ENCODE measurements at regions of chr2 and their contacts with region 1.

Region 1: GRCh38 chr2:64644177-64645004 is 9.3 kb downstream of the SERTAD2 start:
- DNase-seq: peak; percentile 80
- CTCF ChIP-seq: no peak

Region 2: GRCh38 chr2:64859312-64860212 is 215.2 kb after region 1 on chr2:
- in situ Hi-C with region 1: loop called (anchors 5 kb)
- DNase-seq: peak; percentile 89
- CTCF ChIP-seq: no peak